GM12878 (cell line): ENCODE measurements at regions of chr12 and their contacts with region 1.

Region 1: DNA sequence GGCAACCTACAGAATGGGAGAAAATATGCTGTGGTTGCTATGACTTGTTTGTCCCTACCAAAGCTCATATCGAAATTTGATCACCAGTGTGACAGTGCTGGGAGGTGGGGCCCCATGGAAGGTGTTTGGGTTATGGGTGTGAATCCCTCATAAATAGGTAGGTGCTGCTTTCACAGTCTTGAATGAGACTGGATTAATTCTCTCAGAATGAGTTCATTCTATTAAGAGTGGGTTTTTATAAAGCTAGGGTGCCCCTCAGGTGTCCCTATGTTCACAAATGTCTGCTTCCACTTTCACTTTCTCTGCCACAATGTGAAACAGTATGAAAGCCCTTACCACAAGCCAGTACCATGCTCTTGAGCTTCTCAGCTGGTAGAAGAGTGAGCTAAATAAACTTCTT is 133.5 kb downstream of the CPNE8 start:
- DNase-seq: peak; percentile 71
- ATAC-seq: peak; percentile 85
- H3K4me3 ChIP-seq: peak overlapping the region; percentile 6; the same call in 1 of the 2 replicates
- H3K27ac ChIP-seq: peak overlapping the region; percentile 75
- H3K4me1 ChIP-seq: peaks cover 11% of the 10 kb centered on the region; the same call in 1 of the 2 replicates
- H3K27me3 ChIP-seq: no peaks in the 10 kb centered on the region
- CTCF ChIP-seq: no peak
- EP300 ChIP-seq: no peak
- POLR2A ChIP-seq: no peak
- RAD21 ChIP-seq: no peak

Region 2: GRCh38 chr12:38138225-38139221 is 633.3 kb before region 1 on chr12:
- CTCF ChIA-PET with region 1: no interaction called
- POLR2A ChIA-PET with region 1: no interaction called
- RAD21 ChIA-PET with region 1: no interaction called
- SMC1A ChIA-PET with region 1: no interaction called
- in situ Hi-C with region 1: loop called (anchors 25 kb)
- intact Hi-C with region 1: no loop called
- DNase-seq: peak; percentile 23
- ATAC-seq: peak; percentile 73
- H3K4me3 ChIP-seq: no peak overlapping the region
- H3K27ac ChIP-seq: no peak overlapping the region
- H3K4me1 ChIP-seq: no peaks in the 10 kb centered on the region
- H3K27me3 ChIP-seq: no peaks in the 10 kb centered on the region
- CTCF ChIP-seq: peak; percentile 82 to 94 (median 88)
- EP300 ChIP-seq: no peak
- POLR2A ChIP-seq: no peak
- RAD21 ChIP-seq: peak; percentile 81

Region 3: GRCh38 chr12:38350342-38351174 is 421.3 kb before region 1 on chr12:
- CTCF ChIA-PET with region 1: no interaction called
- POLR2A ChIA-PET with region 1: no interaction called
- RAD21 ChIA-PET with region 1: interaction called, 5 read pairs
- SMC1A ChIA-PET with region 1: interaction called, 3 read pairs
- in situ Hi-C with region 1: loop called (anchors 25 kb)
- intact Hi-C with region 1: loop called (anchors 2 kb)
- DNase-seq: peak; percentile 78
- ATAC-seq: peak; percentile 100
- H3K4me3 ChIP-seq: peak overlapping the region; percentile 2; the same call in 1 of the 2 replicates
- H3K27ac ChIP-seq: peak overlapping the region; percentile 77
- H3K4me1 ChIP-seq: peaks cover 5% of the 10 kb centered on the region
- H3K27me3 ChIP-seq: no peaks in the 10 kb centered on the region
- CTCF ChIP-seq: no peak
- EP300 ChIP-seq: peak; percentile 77 to 93
- POLR2A ChIP-seq: no peak
- RAD21 ChIP-seq: no peak

Region 4: DNA sequence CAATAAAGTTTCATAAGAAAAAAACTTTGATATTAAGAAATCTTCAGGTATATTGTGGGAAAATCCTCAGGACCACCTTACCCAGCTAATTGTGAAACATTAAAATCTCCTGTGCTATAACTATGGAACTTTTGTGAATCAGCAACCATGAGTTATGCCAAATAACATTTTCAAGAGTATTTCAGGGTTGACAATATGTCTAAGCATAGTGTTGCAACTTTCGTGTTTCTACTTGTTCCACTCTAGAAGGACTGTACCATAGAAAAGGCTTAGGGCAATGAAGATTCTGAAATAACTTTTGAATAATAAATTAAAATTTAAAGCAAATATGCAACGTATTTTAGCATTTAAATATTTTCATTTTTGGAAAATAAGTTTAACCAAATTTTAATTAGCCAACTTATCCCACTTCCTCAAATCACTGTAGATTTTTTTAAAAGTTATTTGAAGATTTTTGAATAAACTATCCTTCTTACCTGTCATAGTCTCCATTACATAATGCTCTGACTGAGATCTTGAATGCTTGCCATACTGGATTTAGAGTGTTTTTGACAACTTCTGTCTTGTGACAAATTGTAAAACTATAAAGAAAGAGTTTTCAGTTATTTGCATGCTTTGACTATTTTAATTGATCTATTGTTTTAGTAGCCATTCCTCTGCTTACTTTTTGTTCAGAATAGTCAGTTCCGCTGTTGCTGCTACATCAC is 10.1 kb before region 1 on chr12:
- CTCF ChIA-PET with region 1: no interaction called
- POLR2A ChIA-PET with region 1: no interaction called
- RAD21 ChIA-PET with region 1: interaction called, 4 read pairs
- SMC1A ChIA-PET with region 1: interaction called, 10 read pairs
- in situ Hi-C with region 1: no loop called
- intact Hi-C with region 1: no loop called
- DNase-seq: no peak
- ATAC-seq: no peak
- H3K4me3 ChIP-seq: no peak overlapping the region
- H3K27ac ChIP-seq: no peak overlapping the region
- H3K4me1 ChIP-seq: no peaks in the 10 kb centered on the region
- H3K27me3 ChIP-seq: no peaks in the 10 kb centered on the region
- CTCF ChIP-seq: no peak
- EP300 ChIP-seq: no peak
- POLR2A ChIP-seq: no peak
- RAD21 ChIP-seq: no peak

Region 5: GRCh38 chr12:38809832-38810231 is 38.0 kb after region 1 on chr12:
- CTCF ChIA-PET with region 1: interaction called, 3 read pairs
- POLR2A ChIA-PET with region 1: no interaction called
- RAD21 ChIA-PET with region 1: no interaction called
- SMC1A ChIA-PET with region 1: interaction called, 4 read pairs
- in situ Hi-C with region 1: no loop called
- intact Hi-C with region 1: loop called (anchors 5 kb)
- DNase-seq: no peak
- ATAC-seq: no peak
- H3K4me3 ChIP-seq: no peak overlapping the region
- H3K27ac ChIP-seq: no peak overlapping the region
- H3K4me1 ChIP-seq: no peaks in the 10 kb centered on the region
- H3K27me3 ChIP-seq: no peaks in the 10 kb centered on the region
- CTCF ChIP-seq: no peak
- EP300 ChIP-seq: no peak
- POLR2A ChIP-seq: no peak
- RAD21 ChIP-seq: no peak

Region 6: DNA sequence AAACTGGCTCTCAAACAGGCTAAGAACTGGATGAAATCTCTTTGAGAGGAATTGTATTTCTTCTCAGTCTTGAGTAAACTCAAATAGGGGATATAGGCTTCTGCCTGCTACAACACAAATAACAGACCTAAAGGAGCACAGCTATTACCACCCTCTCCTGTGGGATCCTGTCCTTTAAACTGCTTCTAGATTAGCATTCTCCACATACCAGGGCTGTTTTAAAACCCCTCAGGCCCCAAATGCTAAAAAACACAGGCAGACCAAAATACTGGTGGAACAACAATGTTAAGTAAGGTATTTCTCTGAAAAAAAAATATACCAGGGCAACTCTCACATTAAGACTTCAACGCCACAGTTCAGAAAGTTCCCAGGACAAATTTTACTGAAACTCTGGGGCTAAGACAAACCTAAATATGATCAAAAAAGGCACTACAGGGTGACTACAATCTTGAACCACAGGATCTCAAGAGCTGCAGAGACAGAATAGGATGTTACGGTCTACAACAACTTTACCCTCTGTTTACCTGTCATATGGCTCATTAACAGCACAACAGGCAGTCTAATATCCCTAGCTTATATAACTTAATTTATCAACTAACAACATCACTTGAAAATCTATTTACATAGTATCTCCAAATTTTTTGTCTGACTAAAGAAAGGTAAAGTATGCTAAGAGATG is 126.3 kb after region 1 on chr12:
- CTCF ChIA-PET with region 1: interaction called, 34 read pairs
- POLR2A ChIA-PET with region 1: interaction called, 4 read pairs
- RAD21 ChIA-PET with region 1: interaction called, 58 read pairs
- SMC1A ChIA-PET with region 1: interaction called, 21 read pairs
- in situ Hi-C with region 1: loop called (anchors 25 kb)
- intact Hi-C with region 1: no loop called
- DNase-seq: no peak
- ATAC-seq: peak; percentile 13
- H3K4me3 ChIP-seq: no peak overlapping the region
- H3K27ac ChIP-seq: no peak overlapping the region
- H3K4me1 ChIP-seq: no peaks in the 10 kb centered on the region; the same call in none of the 2 replicates
- H3K27me3 ChIP-seq: no peaks in the 10 kb centered on the region
- CTCF ChIP-seq: no peak
- EP300 ChIP-seq: no peak
- POLR2A ChIP-seq: no peak
- RAD21 ChIP-seq: no peak